ENCODE measurements at regions of chr19 and their contacts with region 1.

Region 1: DNA sequence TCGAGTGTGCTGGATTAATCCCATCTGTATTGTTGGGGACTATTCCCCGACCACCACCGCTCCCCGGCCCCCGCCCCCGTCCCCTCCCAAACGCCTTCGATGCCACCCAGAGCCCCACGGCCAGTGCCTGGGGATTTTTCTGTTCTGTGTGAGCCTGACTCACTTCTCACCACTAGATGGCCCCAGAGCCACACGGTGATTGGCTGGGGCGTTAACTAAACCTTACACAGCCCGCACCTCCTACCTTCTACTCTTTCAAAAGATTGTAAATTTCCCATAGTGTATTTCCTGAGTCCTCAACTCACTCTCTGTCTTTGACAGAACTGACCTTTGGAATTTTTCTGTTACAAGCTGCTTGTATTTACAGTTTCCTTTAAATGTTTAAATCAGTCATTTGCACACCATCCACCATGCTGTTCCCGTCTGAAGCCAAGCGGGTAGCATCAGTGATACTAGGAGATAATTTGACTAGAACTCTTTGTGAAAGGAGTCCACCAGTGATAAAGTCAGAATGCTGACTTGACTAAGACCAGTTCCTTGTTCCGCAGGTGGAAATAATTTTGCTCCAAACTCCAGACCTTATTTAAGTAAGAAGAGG is 61.4 kb downstream of the RFX2 start:
- DNase-seq: peak; percentile 84
- ATAC-seq: peak; percentile 97

Region 2: DNA sequence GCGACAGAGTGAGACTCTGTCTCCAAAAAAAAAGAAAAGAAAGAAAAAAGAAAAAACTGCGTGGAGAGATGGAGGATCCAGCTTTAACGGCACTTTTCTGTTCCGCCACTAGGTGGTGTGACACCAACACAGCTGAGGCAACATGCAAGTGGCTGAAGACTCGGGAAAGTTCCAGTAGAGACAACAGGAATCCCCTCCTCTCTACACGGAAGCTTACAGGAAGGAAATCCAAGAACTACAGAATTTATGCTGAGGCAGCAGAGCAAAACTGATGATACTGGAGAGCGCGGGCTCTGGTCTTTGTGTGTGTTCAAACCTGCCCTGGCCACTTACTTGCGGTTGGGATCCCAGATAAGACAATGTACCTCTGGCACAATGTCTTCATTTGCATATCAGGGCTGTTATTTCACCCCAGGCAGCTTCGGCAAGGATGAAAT is 80.9 kb before region 1 on chr19:
- intact Hi-C with region 1: no loop called
- DNase-seq: peak; percentile 76
- ATAC-seq: peak; percentile 89

Region 3: DNA sequence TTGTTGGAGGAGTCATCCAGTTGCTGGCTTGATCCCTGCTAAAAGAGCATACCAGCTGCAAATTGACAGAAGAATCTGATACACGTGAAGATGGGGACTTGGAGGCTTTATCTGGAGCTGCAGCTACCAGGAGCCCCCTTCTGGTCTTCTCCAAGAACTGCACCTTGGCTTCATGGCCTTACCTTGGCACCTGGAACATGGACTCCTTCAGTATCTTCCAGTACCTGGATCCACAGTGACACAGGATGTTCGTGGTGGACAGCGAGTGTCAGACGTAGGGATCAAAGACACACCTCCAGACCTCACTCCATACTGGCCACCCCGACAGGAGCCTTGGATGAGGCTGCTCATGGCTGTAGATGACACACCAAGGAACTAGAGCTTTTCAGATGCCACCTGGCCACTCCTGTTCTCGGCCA is 76.7 kb after region 1 on chr19:
- intact Hi-C with region 1: loop called (anchors 5 kb)
- DNase-seq: no peak
- ATAC-seq: peak; percentile 83

Region 4: GRCh38 chr19:6218491-6219162 is 169.7 kb after region 1 on chr19:
- intact Hi-C with region 1: loop called (anchors 10 kb)
- DNase-seq: peak; percentile 96
- ATAC-seq: peak; percentile 83

Region 5: DNA sequence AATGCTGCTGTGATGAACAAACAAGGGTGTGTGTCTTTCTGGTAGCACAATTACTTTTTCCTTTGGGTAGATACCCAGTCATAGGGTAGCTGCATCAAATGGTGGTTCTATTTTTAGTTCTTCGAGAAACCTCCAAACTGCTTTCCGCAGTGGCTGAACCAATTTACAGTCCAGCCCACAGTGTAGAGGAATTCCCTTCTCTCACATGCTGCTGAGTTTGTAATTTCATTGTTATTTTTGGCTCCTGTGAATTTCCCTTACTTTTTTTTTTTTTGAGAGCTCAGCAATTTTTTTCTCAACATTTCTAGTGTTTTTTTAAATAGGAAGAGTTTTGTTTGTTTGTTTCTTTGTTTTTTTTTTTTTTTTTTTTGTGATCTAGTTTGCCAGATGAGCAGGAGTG is 801.0 kb after region 1 on chr19:
- intact Hi-C with region 1: no loop called
- DNase-seq: no peak
- ATAC-seq: no peak